ENCODE measurements at regions of chr10 and their contacts with region 1.

Region 1: GRCh38 chr10:21533467-21534279 is at the start of gene MLLT10:
- DNase-seq: peak; percentile 81
- ATAC-seq: peak; percentile 84
- H3K4me3 ChIP-seq: peak within 1 kb of the TSS; percentile 60 to 70
- H3K27ac ChIP-seq: peak within 1 kb of the TSS; percentile 76
- H3K4me1 ChIP-seq: peaks cover 21 to 65% of the 10 kb centered on the region in 2 experiments; a peak in 3 of 4 replicates
- H3K27me3 ChIP-seq: no peaks in the 10 kb centered on the region
- CTCF ChIP-seq: peak in 2 of 3 experiments; percentile 28 to 34; a peak in 3 of 6 replicates
- POLR2A ChIP-seq: peak; percentile 63
- RAD21 ChIP-seq: 0 out of 2 replicates have a peak, but pooled peaks have one; percentile 0
- total RNA-seq, gene MLLT10: 45.2 TPM

Region 2: DNA sequence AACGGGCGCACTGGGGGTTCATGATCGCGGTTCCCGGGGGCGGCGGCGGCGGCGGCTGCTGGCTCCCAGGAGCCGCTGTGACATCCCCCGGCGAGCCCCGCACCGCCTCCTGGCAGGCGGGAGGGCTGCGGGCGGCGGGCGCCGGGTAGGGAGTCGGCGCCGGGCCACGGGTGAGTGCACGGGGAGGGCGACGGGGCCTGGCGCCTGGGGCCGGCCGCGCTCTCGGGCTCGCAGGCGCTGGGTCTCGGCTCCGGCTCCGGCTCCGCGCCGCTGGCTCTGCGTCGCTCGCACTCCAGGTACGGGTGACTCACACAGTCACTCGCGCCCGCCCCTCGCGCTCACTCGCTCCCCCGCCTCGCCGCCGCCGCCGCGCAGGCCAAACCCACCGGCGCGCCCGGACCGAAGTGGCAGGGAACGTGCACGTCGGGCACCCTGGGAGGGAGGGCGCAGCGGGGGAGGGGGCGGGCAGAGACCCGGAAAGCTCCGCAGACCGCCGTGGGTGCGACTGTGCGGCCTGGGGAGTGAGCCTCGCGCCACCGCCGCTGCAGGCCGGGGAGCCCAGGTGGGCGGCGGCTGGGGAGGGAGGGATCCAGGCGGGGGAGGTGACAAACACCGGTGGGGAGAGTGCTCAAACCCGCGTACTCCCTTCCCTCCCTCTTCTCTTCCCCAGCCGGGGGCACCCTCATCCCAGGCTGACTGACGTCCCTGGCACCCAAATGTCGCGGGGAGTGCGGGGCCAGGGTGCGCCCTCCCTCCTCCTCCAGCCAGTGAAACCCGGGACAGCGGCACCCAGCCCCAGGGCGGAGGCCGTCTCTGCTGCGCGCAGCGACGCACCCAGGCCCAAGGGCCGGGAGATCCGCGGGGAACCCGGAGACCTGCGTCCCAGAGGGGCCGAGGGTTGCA is 359.6 kb before region 1 on chr10:
- CTCF ChIA-PET with region 1: no interaction called
- POLR2A ChIA-PET with region 1: no interaction called
- RAD21 ChIA-PET with region 1: no interaction called
- intact Hi-C with region 1: loop called (anchors 5 kb)
- DNase-seq: peak; percentile 63
- ATAC-seq: peak; percentile 80
- H3K4me3 ChIP-seq: peak overlapping the region; percentile 75 to 77
- H3K27ac ChIP-seq: peak overlapping the region; percentile 90
- H3K4me1 ChIP-seq: peaks cover 24 to 39% of the 10 kb centered on the region in 2 experiments
- H3K27me3 ChIP-seq: no peaks in the 10 kb centered on the region
- CTCF ChIP-seq: no peak
- POLR2A ChIP-seq: no peak
- RAD21 ChIP-seq: peak; percentile 33; the same call in 1 of the 2 replicates

Region 3: GRCh38 chr10:21556527-21556926 is 22.9 kb after region 1 on chr10:
- CTCF ChIA-PET with region 1: no interaction called
- POLR2A ChIA-PET with region 1: no interaction called
- RAD21 ChIA-PET with region 1: no interaction called
- intact Hi-C with region 1: no loop called
- DNase-seq: no peak
- ATAC-seq: no peak
- H3K4me3 ChIP-seq: no peak overlapping the region
- H3K27ac ChIP-seq: no peak overlapping the region
- H3K4me1 ChIP-seq: peaks cover 3 to 4% of the 10 kb centered on the region in 2 experiments; a peak in 2 of 4 replicates
- H3K27me3 ChIP-seq: no peaks in the 10 kb centered on the region
- CTCF ChIP-seq: no peak
- POLR2A ChIP-seq: no peak
- RAD21 ChIP-seq: no peak